Calu3 (cell line): ENCODE measurements at regions of chr4 and their contacts with region 1.

Region 1: GRCh38 chr4:138576684-138577083 is 334.5 kb upstream of the SLC7A11 start:
- DNase-seq: peak; percentile 19
- H3K4me3 Mint-ChIP-seq: no peak overlapping the region
- H3K27ac Mint-ChIP-seq: no peak overlapping the region
- H3K4me1 Mint-ChIP-seq: peaks cover 9% of the 10 kb centered on the region
- H3K27me3 Mint-ChIP-seq: no peaks in the 10 kb centered on the region
- CTCF ChIP-seq: peak; percentile 33

Region 2: DNA sequence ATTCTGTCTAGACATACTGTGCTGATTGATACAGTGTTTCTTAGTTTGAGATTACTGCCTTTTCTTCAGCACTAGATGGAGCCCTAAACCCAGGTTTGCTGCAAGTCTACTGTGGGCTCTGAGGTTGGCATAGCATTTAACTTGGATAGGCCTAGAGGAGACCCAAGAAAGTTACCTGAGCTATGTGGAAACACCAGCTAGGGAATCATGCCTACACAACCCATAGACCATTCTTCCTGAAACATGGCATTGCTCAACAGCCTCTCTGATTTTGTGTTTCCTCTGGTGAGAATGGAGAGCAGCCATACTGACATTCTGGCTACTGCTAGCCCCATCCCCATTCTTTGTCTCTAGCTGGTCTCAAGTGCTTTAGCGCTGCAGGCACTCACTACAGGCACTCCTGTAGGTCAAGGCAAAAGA is 756.7 kb before region 1 on chr4:
- CTCF ChIA-PET with region 1: no interaction called
- intact Hi-C with region 1: loop called (anchors 5 kb)
- DNase-seq: peak; percentile 32
- H3K4me3 Mint-ChIP-seq: no peak overlapping the region
- H3K27ac Mint-ChIP-seq: no peak overlapping the region
- H3K4me1 Mint-ChIP-seq: no peaks in the 10 kb centered on the region
- H3K27me3 Mint-ChIP-seq: no peaks in the 10 kb centered on the region
- CTCF ChIP-seq: peak; percentile 54

Region 3: GRCh38 chr4:138090150-138090917 is 486.4 kb before region 1 on chr4:
- CTCF ChIA-PET with region 1: no interaction called
- intact Hi-C with region 1: loop called (anchors 5 kb)
- DNase-seq: peak; percentile 72
- H3K4me3 Mint-ChIP-seq: peak overlapping the region; percentile 61
- H3K27ac Mint-ChIP-seq: peak overlapping the region; percentile 22
- H3K4me1 Mint-ChIP-seq: peaks cover 33% of the 10 kb centered on the region
- H3K27me3 Mint-ChIP-seq: no peaks in the 10 kb centered on the region
- CTCF ChIP-seq: peak; percentile 30

Region 4: DNA sequence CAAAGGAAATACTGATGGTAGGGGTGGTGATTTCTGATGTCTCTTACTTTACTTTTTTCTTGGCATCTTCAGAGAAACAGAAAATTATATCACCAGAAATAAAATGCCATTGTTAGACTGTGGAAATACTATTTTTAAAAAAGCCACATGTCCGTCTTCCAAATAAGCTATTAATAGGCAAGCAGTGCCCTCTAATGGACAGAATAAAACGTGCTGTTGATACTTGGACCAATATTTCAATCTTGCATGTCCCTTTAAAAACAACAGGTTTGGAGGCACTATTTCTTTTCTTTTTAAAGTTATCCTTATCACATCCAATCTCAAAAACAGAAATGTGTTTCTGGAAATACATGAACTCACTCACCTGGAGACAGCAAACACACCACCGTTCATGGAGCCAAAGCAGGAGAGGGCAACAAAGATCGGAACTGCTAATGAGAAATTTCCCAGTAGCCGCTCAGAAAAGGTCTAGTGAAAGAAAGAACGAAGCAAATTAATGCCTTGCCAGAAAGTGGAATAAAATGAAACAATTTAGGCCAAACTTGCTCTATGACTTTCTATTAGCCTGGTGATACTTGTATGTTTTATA is 393.8 kb before region 1 on chr4:
- CTCF ChIA-PET with region 1: no interaction called
- intact Hi-C with region 1: loop called (anchors 2 kb)
- DNase-seq: peak; percentile 24
- H3K4me3 Mint-ChIP-seq: no peak overlapping the region
- H3K27ac Mint-ChIP-seq: peak overlapping the region; percentile 58
- H3K4me1 Mint-ChIP-seq: peaks cover 39% of the 10 kb centered on the region
- H3K27me3 Mint-ChIP-seq: no peaks in the 10 kb centered on the region
- CTCF ChIP-seq: peak; percentile 30

Region 5: DNA sequence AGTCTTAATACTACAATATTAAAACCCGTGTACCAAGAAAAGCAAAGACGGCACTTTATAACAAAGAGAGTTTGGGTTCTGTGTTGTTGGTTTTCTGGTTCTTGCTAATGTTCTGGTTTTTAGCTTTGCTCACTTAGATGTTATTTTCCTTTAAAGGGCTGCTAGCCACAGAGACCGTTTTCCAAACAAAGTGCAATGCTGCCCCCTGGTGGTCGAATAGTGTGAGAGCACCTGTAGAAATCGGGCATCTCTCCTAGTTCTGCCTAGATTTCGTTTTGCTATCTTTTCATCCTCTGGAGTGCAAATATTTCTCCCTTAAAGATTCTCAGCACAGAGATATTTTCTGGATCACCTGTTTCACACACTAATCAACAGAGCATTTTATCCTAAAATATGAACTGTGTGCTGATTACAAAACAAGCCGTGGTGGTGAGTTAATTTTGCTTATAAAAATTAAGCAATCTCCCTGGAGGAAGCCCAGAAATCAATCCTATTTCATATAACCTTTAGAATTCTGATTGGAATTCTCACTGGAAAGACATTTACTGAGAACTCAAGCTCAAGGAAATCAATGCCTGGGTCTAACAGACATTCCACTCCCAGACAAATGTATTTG is 104.4 kb after region 1 on chr4:
- CTCF ChIA-PET with region 1: interaction called, 5 read pairs
- intact Hi-C with region 1: loop called (anchors 1 kb)
- DNase-seq: peak; percentile 71
- H3K4me3 Mint-ChIP-seq: no peak overlapping the region
- H3K27ac Mint-ChIP-seq: no peak overlapping the region
- H3K4me1 Mint-ChIP-seq: peaks cover 23% of the 10 kb centered on the region
- H3K27me3 Mint-ChIP-seq: no peaks in the 10 kb centered on the region
- CTCF ChIP-seq: peak; percentile 77

Region 6: DNA sequence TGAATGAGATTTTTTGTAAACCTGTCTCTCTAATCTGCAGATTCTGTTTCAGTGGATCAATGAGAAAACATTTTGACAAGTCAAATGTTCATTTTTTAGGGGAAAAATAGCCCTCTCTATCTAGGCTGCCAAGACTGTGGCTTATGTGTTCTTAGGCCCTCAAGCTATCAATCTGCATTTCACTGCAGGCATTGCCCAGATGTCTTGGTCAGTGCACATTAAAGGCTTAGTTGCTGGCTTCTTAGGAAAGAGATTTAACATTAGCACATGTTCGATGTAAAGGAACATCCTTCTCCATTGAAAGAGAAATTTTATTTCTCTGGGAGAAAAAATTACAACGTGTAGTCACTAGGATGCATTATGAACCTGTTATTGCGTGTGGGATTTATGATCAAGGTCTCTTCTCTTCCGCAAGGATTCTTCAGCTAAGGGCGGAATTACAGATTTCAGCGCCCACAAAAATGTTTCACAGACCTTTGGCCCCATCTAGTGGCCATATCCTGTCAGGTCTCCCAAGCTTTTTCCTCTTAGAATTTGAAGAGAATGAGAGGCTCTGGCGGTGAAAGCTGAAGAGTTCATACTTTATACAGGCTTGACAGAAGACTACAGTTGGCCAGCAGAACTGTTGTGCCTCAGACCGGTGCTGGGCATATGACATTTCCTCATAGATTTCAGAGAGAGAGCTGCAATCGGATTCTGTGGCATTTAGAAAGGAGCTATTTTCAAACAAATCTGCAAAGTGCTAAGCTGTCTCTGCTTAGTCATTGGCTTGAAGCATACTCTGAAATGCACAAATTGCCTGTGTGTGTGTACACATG is 294.3 kb after region 1 on chr4:
- CTCF ChIA-PET with region 1: interaction called, 14 read pairs
- intact Hi-C with region 1: loop called (anchors 2 kb)
- DNase-seq: peak; percentile 63
- H3K4me3 Mint-ChIP-seq: no peak overlapping the region
- H3K27ac Mint-ChIP-seq: no peak overlapping the region
- H3K4me1 Mint-ChIP-seq: peaks cover 7% of the 10 kb centered on the region
- H3K27me3 Mint-ChIP-seq: peaks cover 13% of the 10 kb centered on the region
- CTCF ChIP-seq: peak; percentile 49